Activated CD4-positive, alpha-beta memory T cell treated with anti-CD3 and anti-CD28 coated beads for 36 hours (primary cell): ENCODE measurements at regions of chr12 and their contacts with region 1.

Region 1: GRCh38 chr12:29380536-29381523 is at the start of gene ERGIC2:
- DNase-seq: peak; percentile 93
- H3K4me3 Mint-ChIP-seq: peak within 1 kb of the TSS; percentile 80
- H3K27ac Mint-ChIP-seq: peak within 1 kb of the TSS; percentile 89
- H3K4me1 Mint-ChIP-seq: peaks cover 45% of the 10 kb centered on the region
- H3K27me3 Mint-ChIP-seq: no peaks in the 10 kb centered on the region
- total RNA-seq, gene ERGIC2: 103 to 120 TPM

Region 2: DNA sequence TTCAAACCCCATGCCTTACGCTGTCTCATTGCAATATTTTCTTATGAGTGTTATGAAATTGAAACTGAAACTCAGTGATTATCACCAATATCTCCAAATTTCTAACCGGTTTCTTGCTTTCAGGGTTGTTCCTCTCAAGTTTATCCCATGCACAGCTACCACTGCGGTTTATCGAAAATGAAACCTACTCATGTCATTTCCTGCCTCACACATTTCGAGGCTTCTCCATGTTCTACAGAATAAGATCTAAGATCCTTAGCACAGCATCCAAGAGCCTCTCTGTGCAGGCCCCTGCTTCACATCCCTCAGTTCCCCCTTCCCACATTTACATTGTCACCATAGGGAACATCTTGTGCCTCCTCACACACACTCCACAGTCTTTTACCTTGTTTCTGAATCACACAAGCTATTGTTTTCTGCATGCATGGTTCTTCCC is 277.3 kb before region 1 on chr12:
- CTCF ChIA-PET with region 1: no interaction called
- POLR2A ChIA-PET with region 1: interaction called, 3 read pairs
- intact Hi-C with region 1: loop called (anchors 2 kb)
- DNase-seq: peak; percentile 64
- H3K4me3 Mint-ChIP-seq: peak overlapping the region; percentile 4
- H3K27ac Mint-ChIP-seq: peak overlapping the region; percentile 56
- H3K4me1 Mint-ChIP-seq: peaks cover 32% of the 10 kb centered on the region
- H3K27me3 Mint-ChIP-seq: no peaks in the 10 kb centered on the region

Region 3: DNA sequence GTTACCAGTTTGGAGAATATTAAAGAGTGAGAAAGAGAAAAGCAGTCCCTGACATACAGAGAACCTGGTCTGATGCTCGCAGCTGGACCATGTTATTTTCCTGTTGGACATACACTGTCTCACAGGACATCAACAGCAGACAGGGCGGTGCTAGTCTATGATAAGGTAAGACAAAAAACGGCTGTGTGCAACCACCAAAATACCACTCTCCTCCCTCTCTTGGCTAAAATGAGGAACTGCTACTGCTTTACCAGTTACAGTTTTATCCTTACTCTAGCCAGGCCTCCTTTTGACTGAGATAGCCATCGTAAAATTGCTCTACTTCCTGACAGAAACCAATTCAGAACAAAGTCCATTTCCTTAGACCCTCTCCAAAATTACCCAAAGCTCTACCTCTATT is 47.1 kb after region 1 on chr12:
- CTCF ChIA-PET with region 1: no interaction called
- POLR2A ChIA-PET with region 1: no interaction called
- intact Hi-C with region 1: loop called (anchors 1 kb)
- DNase-seq: no peak
- H3K4me3 Mint-ChIP-seq: no peak overlapping the region
- H3K27ac Mint-ChIP-seq: no peak overlapping the region
- H3K4me1 Mint-ChIP-seq: peaks cover 8% of the 10 kb centered on the region
- H3K27me3 Mint-ChIP-seq: peaks cover 8% of the 10 kb centered on the region

Region 4: DNA sequence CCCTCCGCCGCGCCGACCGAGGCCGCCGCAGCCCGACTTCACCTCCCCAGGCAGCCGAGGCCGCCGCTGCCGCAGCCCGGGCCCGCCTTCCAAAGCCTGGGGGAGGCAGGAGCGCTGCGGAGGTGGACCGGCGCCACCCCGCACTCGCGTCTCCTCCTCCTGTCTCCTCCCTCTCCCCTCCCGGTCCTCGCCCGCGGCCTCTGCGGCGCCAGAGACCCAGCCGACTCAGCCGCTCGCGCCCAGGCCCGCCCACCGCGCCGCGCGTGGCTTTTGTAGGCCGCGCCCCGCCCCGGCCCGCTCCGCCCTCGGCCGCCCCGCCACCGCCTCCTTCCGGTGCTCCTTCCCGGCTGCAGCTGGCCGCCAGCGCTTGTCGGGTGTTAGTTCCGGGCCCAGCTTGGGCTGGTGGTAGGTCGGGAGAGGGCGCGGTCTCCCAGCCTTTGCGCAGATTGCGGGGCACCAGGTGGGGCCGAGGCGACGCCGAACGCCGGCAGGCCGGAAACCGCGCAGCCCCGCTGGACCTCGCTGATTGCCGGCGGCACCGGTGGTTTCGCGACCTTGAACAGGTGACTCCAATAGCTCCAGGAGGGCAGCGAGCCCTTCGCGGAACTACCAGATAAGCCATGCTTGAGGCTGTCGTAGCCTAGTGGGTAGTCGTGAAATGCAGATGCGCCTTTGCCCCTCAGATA is 1374.0 kb after region 1 on chr12 and contains the start of gene CAPRIN2:
- CTCF ChIA-PET with region 1: no interaction called
- POLR2A ChIA-PET with region 1: no interaction called
- intact Hi-C with region 1: loop called (anchors 2 kb)
- DNase-seq: peak; percentile 96
- H3K4me3 Mint-ChIP-seq: peak within 1 kb of the TSS; percentile 95
- H3K27ac Mint-ChIP-seq: peak within 1 kb of the TSS; percentile 83
- H3K4me1 Mint-ChIP-seq: peaks cover 43% of the 10 kb centered on the region
- H3K27me3 Mint-ChIP-seq: no peaks in the 10 kb centered on the region
- total RNA-seq, gene CAPRIN2: 10.0 to 11.5 TPM